Panc1 (cell line): ENCODE measurements at regions of chr6 and their contacts with region 1.

Region 1: GRCh38 chr6:35562053-35562452 is 49.4 kb upstream of the TULP1 start:
- DNase-seq: no peak
- ATAC-seq: no peak
- H3K4me3 ChIP-seq: no peak overlapping the region
- H3K27ac ChIP-seq: no peak overlapping the region
- H3K4me1 ChIP-seq: no peaks in the 10 kb centered on the region
- H3K27me3 ChIP-seq: peaks cover 13% of the 10 kb centered on the region; the same call in 1 of the 2 replicates
- CTCF ChIP-seq: no peak

Region 2: DNA sequence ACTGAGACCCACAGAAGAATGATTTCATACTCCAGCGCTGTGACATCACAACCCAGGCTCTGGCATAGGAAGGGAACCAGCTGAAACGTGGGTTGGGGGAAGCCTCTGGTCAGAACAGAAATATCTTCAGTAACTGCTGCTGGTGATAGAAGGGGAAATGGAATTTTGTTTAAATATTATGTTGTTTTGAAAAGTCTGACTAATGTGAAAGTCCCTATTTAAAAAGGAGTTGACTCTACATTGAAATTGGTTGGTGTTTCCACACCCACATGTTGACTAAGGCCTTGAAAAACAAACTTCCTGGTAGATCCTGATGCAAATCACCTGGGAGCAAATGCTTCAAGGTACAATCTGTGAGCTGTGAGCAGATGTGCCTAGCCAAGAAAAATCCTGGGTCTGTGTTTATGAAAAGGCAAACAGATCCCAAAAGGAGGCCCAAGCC is 396.4 kb before region 1 on chr6:
- CTCF ChIA-PET with region 1: no interaction called
- POLR2A ChIA-PET with region 1: no interaction called
- in situ Hi-C with region 1: no loop called
- intact Hi-C with region 1: no loop called
- DNase-seq: peak; percentile 27
- ATAC-seq: peak; percentile 84
- H3K4me3 ChIP-seq: no peak overlapping the region
- H3K27ac ChIP-seq: peak overlapping the region; percentile 53
- H3K4me1 ChIP-seq: peaks cover 7% of the 10 kb centered on the region; the same call in 1 of the 2 replicates
- H3K27me3 ChIP-seq: no peaks in the 10 kb centered on the region
- CTCF ChIP-seq: no peak

Region 3: DNA sequence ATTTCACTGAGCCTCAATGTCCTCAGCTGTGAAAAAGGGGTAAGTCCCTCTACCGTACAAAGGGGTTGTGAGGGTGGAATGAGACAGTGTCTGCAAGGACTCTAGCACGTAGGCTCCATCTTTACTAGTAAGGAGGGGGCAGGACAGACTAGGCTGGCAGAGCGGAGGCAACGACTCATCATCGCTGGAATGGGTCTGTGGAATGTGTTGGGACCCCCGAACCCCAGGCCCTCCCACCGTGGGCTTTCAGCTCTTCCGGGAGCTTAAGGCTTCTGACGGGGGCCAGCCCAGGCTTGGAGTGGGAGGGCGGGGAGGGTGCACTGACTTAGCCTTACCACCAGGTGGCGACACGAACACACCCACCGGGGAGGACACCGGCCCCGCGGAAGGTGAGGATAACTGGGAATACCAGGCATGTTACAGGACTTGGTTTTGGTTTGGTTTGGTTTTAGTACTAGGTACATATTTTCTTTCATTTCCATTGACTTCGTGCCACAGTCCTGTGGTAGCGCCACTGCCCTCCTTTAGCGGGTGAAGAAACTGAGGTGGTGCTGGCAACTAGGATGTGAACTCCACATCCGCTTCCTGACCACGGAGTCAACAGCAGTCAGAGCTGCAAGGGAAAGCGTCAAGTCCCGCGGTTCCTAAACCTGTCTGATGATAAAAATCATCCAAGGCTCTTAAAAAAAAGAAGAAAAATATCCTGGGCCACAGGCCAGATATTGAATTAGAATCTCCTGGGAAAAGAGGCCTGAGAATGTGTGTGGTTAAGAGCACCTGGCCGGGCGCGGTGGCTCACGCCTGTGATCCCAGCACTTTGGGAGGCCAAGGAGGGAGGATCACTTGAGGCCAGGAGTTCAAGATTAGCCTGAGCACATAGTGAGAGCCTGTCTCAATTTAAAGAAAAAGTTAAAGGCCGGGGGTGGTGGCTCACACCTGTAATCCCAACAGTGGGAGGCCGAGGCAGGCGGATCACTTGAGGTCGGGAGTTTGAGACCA is 39.1 kb before region 1 on chr6:
- CTCF ChIA-PET with region 1: interaction called, 10 read pairs
- POLR2A ChIA-PET with region 1: no interaction called
- in situ Hi-C with region 1: no loop called
- intact Hi-C with region 1: no loop called
- DNase-seq: peak; percentile 51
- ATAC-seq: peak; percentile 95
- H3K4me3 ChIP-seq: peak overlapping the region in 1 of 2 experiments; percentile 20; a peak in 1 of 4 replicates
- H3K27ac ChIP-seq: no peak overlapping the region
- H3K4me1 ChIP-seq: no peaks in the 10 kb centered on the region
- H3K27me3 ChIP-seq: no peaks in the 10 kb centered on the region
- CTCF ChIP-seq: peak; percentile 97

Region 4: GRCh38 chr6:35893246-35893645 is 331.2 kb after region 1 on chr6:
- CTCF ChIA-PET with region 1: no interaction called
- POLR2A ChIA-PET with region 1: no interaction called
- in situ Hi-C with region 1: no loop called
- intact Hi-C with region 1: no loop called
- DNase-seq: no peak
- ATAC-seq: no peak
- H3K4me3 ChIP-seq: no peak overlapping the region
- H3K27ac ChIP-seq: no peak overlapping the region
- H3K4me1 ChIP-seq: no peaks in the 10 kb centered on the region
- H3K27me3 ChIP-seq: no peaks in the 10 kb centered on the region
- CTCF ChIP-seq: no peak

Region 5: DNA sequence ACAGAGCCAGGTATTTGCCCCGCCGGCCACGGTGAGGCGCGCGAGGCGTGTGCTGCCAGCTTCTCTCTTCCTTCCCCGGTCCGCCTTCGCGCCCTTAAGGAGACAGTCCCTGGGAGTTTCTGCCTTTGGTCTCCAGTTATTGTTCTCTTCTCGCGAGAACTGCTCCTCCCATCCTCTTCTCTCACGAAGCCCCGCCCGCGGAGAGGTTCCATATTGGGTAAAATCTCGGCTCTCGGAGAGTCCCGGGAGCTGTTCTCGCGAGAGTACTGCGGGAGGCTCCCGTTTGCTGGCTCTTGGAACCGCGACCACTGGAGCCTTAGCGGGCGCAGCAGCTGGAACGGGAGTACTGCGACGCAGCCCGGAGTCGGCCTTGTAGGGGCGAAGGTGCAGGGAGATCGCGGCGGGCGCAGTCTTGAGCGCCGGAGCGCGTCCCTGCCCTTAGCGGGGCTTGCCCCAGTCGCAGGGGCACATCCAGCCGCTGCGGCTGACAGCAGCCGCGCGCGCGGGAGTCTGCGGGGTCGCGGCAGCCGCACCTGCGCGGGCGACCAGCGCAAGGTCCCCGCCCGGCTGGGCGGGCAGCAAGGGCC is 465.5 kb after region 1 on chr6 and contains the start of gene MAPK14:
- CTCF ChIA-PET with region 1: no interaction called
- POLR2A ChIA-PET with region 1: interaction called, 10 read pairs
- in situ Hi-C with region 1: no loop called
- intact Hi-C with region 1: no loop called
- DNase-seq: peak; percentile 98
- ATAC-seq: peak; percentile 95
- H3K4me3 ChIP-seq: peak within 1 kb of the TSS; percentile 88 to 91
- H3K27ac ChIP-seq: peak within 1 kb of the TSS; percentile 91
- H3K4me1 ChIP-seq: peaks cover 15% of the 10 kb centered on the region
- H3K27me3 ChIP-seq: no peaks in the 10 kb centered on the region
- CTCF ChIP-seq: peak; percentile 96
- total RNA-seq, gene MAPK14: 42.3 TPM